Mammary epithelial cell (primary cell): ENCODE measurements at regions of chr1 and their contacts with region 1.

Region 1: DNA sequence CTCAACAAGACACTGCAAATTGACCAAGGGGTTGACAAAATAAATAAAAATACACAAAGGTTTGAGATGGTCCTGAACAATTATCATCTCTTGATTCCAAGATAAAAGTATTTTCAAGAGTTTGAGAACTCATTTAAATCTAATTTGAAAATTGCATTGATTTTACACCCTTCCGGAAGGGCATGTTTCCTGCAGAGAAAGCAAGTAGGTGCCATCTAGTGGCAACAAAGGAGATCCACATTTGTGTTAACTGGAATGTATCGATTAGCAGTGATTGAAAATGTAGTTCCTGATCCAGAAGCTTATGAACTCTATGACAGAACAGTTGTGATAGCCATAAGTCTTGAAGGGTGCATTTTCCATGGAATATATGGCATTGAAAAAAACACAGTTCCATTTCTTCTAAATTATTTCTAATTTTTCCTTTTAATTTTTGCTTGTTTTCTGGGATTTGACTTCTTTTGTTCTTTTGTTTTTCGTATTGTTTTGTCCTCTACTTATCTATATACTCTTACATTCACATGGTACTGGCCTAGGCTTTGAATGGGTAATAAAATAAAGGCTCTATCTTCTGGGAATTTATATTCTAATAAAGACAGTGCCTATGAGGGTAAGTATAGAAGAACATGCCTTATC is 143.7 kb downstream of the DNM3 start:
- DNase-seq: no peak
- H3K4me3 ChIP-seq: no peak overlapping the region
- H3K27ac ChIP-seq: no peak overlapping the region
- H3K4me1 ChIP-seq: no peaks in the 10 kb centered on the region
- H3K27me3 ChIP-seq: no peaks in the 10 kb centered on the region
- CTCF ChIP-seq: peak; percentile 80 to 81

Region 2: DNA sequence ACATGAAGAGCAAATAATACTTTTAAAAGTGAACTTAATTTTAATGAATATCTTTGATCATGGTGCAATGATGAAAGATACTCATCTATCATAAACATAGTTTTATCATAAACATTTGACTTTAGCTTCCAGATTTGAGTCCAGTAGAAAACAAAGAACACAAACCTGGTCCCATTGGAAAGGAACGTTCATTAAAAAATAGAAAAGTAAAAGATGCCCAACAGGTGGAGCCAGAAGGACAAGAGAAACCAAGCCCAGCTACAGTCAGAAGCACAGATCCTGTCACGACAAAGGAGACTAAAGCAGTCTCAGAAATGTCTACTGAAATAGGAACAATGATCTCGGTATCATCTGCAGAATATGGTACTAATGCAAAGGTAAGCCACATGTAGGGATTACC is 418.5 kb before region 1 on chr1:
- CTCF ChIA-PET with region 1: no interaction called
- dilution Hi-C with region 1: no loop called
- in situ Hi-C with region 1: no loop called
- intact Hi-C with region 1: loop called (anchors 2 kb)
- DNase-seq: no peak
- H3K4me3 ChIP-seq: no peak overlapping the region
- H3K27ac ChIP-seq: no peak overlapping the region
- H3K4me1 ChIP-seq: no peaks in the 10 kb centered on the region
- H3K27me3 ChIP-seq: no peaks in the 10 kb centered on the region
- CTCF ChIP-seq: peak in 1 of 2 donors; percentile 17

Region 3: DNA sequence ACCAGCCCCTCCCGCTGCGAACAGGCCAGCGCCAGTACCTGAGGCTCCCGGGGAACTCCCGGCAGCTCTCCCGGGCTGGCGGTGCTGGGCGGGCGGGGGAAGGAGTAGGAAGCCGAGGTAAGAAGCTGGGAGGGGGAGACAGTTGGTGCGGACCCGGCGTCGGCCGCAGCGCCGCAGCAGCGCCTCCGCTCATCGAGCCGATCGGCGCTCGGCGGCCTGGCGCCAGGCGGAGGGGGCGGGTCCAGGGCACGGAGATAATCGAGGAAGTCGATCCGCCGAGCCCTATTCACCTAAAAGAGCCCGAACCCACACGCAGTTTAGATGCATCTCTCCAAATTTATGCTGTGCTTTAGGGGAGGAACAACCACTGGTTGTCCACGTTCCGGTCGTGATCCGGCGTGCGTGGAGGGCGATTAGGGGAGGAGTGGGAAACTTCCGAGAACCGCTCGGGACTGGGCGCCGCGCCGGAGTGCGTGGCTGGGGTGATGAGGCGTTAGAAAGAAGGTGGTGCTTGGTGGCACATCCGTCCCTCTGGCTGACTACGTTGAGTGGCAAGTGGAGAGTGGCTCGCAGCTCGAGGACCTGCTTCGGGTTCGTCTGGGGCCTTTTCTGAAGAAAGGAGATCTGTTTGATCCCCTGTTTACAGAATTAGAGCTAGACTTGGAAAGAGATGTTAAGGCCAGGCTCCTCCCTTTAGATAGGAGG is 242.9 kb before region 1 on chr1 and contains the start of gene VAMP4:
- CTCF ChIA-PET with region 1: no interaction called
- dilution Hi-C with region 1: no loop called
- in situ Hi-C with region 1: no loop called
- intact Hi-C with region 1: loop called (anchors 1 kb)
- DNase-seq: peak; percentile 85
- H3K4me3 ChIP-seq: peak within 1 kb of the TSS; percentile 49 to 91 (median 77)
- H3K27ac ChIP-seq: peak within 1 kb of the TSS; percentile 93
- H3K4me1 ChIP-seq: peaks cover 35% of the 10 kb centered on the region
- H3K27me3 ChIP-seq: no peaks in the 10 kb centered on the region
- CTCF ChIP-seq: no peak
- total RNA-seq, gene VAMP4: 6.7 to 13.8 TPM

Region 4: GRCh38 chr1:171801487-171801891 is 183.5 kb before region 1 on chr1:
- CTCF ChIA-PET with region 1: interaction called, 10 read pairs
- dilution Hi-C with region 1: loop called (anchors 5 kb)
- in situ Hi-C with region 1: loop called (anchors 5 kb)
- intact Hi-C with region 1: loop called (anchors 1 kb)
- DNase-seq: peak; percentile 35
- H3K4me3 ChIP-seq: no peak overlapping the region
- H3K27ac ChIP-seq: no peak overlapping the region
- H3K4me1 ChIP-seq: no peaks in the 10 kb centered on the region
- H3K27me3 ChIP-seq: no peaks in the 10 kb centered on the region
- CTCF ChIP-seq: peak; percentile 76 to 86

Region 5: GRCh38 chr1:171841050-171841940 is 143.7 kb before region 1 on chr1 and contains the start of gene DNM3:
- CTCF ChIA-PET with region 1: no interaction called
- dilution Hi-C with region 1: no loop called
- in situ Hi-C with region 1: no loop called
- intact Hi-C with region 1: loop called (anchors 1 kb)
- DNase-seq: peak; percentile 72
- H3K4me3 ChIP-seq: peak within 1 kb of the TSS; percentile 71 to 100 (median 86)
- H3K27ac ChIP-seq: peak within 1 kb of the TSS; percentile 35
- H3K4me1 ChIP-seq: peaks cover 14% of the 10 kb centered on the region
- H3K27me3 ChIP-seq: no peaks in the 10 kb centered on the region
- CTCF ChIP-seq: no peak
- total RNA-seq, gene DNM3: 3.0 to 6.4 TPM